HCT116 (cell line): ENCODE measurements at regions of chr1 and their contacts with region 1.

Region 1: GRCh38 chr1:40338745-40339424 is 21.8 kb upstream of the COL9A2 start:
- DNase-seq: peak; percentile 74
- ATAC-seq: peak; percentile 97
- H3K4me3 ChIP-seq: no peak overlapping the region
- H3K27ac ChIP-seq: no peak overlapping the region
- H3K4me1 ChIP-seq: peaks cover 0 to 4% of the 10 kb centered on the region in 2 experiments; a peak in 1 of 4 replicates
- H3K27me3 ChIP-seq: no peaks in the 10 kb centered on the region
- CTCF ChIP-seq: peak; percentile 93 to 99 (median 98)
- POLR2A ChIP-seq: no peak
- RAD21 ChIP-seq: peak; percentile 99

Region 2: DNA sequence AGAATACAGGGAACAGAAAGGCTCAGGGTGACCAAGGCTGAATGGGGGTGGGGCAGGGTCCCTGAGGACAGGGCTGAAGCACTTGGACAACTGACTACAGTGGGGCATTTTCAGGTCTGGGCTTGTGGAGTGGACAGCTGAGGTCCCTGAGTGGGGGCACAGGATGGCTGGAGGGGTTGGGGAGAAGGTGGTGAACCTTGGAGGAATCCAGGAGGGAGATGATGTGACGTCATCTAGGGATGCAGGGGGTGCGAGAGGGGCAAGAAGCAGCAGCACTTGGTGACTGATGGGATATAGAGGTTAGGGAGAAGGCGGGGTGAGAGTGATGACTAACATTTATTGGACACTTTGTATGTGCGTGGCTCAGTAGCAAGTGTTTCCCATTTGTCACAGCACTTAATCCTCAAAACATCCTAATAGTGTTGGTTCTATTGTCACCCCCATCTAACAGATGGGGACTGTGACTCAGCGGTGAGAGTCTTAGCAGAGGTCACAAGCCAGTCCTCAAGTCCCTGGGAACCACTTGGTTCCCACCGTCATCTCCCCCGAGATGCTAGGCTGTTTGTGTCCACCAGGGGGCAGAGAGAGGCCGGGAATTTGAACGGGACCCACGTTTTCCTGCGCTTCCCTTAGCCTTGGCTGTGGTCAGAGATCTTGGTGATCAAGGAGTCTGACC is 522.3 kb before region 1 on chr1:
- CTCF ChIA-PET with region 1: interaction called, 3 read pairs
- POLR2A ChIA-PET with region 1: no interaction called
- RAD21 ChIA-PET with region 1: no interaction called
- intact Hi-C with region 1: loop called (anchors 10 kb)
- DNase-seq: peak; percentile 61
- ATAC-seq: peak; percentile 89
- H3K4me3 ChIP-seq: no peak overlapping the region
- H3K27ac ChIP-seq: no peak overlapping the region
- H3K4me1 ChIP-seq: peaks cover 0 to 15% of the 10 kb centered on the region in 2 experiments; a peak in 3 of 4 replicates
- H3K27me3 ChIP-seq: no peaks in the 10 kb centered on the region
- CTCF ChIP-seq: peak; percentile 76 to 86 (median 85)
- POLR2A ChIP-seq: no peak
- RAD21 ChIP-seq: peak; percentile 89

Region 3: GRCh38 chr1:39866767-39867166 is 472.1 kb before region 1 on chr1:
- CTCF ChIA-PET with region 1: no interaction called
- POLR2A ChIA-PET with region 1: no interaction called
- RAD21 ChIA-PET with region 1: no interaction called
- intact Hi-C with region 1: no loop called
- DNase-seq: no peak
- ATAC-seq: no peak
- H3K4me3 ChIP-seq: no peak overlapping the region
- H3K27ac ChIP-seq: no peak overlapping the region
- H3K4me1 ChIP-seq: peaks cover 0 to under 1% of the 10 kb centered on the region in 2 experiments; a peak in 1 of 4 replicates
- H3K27me3 ChIP-seq: no peaks in the 10 kb centered on the region
- CTCF ChIP-seq: no peak
- POLR2A ChIP-seq: no peak
- RAD21 ChIP-seq: no peak

Region 4: GRCh38 chr1:40078512-40079333 is 260.2 kb before region 1 on chr1:
- CTCF ChIA-PET with region 1: interaction called, 44 read pairs
- POLR2A ChIA-PET with region 1: no interaction called
- RAD21 ChIA-PET with region 1: interaction called, 5 to 6 read pairs
- intact Hi-C with region 1: loop called (anchors 1 kb)
- DNase-seq: peak; percentile 41
- ATAC-seq: peak; percentile 89
- H3K4me3 ChIP-seq: no peak overlapping the region
- H3K27ac ChIP-seq: no peak overlapping the region
- H3K4me1 ChIP-seq: no peaks in the 10 kb centered on the region
- H3K27me3 ChIP-seq: no peaks in the 10 kb centered on the region
- CTCF ChIP-seq: peak; percentile 63 to 81 (median 71); a peak in 5 of 6 replicates
- POLR2A ChIP-seq: no peak
- RAD21 ChIP-seq: peak; percentile 70

Region 5: DNA sequence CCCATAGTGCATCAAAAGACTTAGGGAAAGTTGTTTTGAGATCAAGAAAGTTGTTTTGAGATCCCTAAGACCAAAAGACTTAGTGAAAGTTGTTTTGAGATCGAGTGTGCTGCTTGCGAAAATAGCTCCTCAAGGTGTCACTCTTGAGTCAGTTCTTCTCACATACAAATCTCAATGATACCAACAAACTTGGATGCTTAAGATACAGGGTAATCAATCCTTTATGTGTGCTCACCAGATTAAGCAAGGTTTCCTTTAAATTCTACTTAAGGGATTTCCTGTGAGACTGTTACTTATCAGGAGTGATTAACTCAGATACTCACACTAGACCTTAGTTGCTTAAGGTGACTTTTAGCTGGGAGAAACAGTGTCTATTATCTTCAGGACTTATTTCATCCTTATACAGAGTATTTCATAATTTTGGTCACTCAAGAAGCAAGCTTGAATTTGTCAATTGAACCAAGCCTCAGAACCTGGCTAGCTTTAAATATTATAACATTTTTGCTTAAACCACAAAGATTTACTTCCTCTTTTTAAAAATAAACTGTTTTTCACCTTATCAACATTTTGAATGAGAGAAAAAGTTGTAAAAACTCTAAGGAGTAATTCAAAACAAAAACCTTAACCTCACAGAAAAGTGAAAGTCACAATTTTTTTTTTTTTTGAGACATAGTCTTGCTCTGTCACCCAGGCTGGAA is 185.7 kb before region 1 on chr1:
- CTCF ChIA-PET with region 1: interaction called, 71 read pairs
- POLR2A ChIA-PET with region 1: interaction called, 4 read pairs
- RAD21 ChIA-PET with region 1: interaction called, 3 to 12 read pairs
- intact Hi-C with region 1: loop called (anchors 1 kb)
- DNase-seq: peak; percentile 62
- ATAC-seq: peak; percentile 92
- H3K4me3 ChIP-seq: peak overlapping the region in 1 of 2 experiments; percentile 33; a peak in 2 of 4 replicates
- H3K27ac ChIP-seq: no peak overlapping the region
- H3K4me1 ChIP-seq: peaks cover 0 to 6% of the 10 kb centered on the region in 2 experiments; a peak in 1 of 4 replicates
- H3K27me3 ChIP-seq: no peaks in the 10 kb centered on the region
- CTCF ChIP-seq: peak; percentile 71 to 79 (median 76)
- POLR2A ChIP-seq: no peak
- RAD21 ChIP-seq: peak; percentile 83

Region 6: GRCh38 chr1:40353082-40353481 is 14.2 kb after region 1 on chr1:
- CTCF ChIA-PET with region 1: interaction called, 10 read pairs
- POLR2A ChIA-PET with region 1: no interaction called
- RAD21 ChIA-PET with region 1: no interaction called
- intact Hi-C with region 1: no loop called
- DNase-seq: no peak
- ATAC-seq: no peak
- H3K4me3 ChIP-seq: no peak overlapping the region
- H3K27ac ChIP-seq: no peak overlapping the region
- H3K4me1 ChIP-seq: no peaks in the 10 kb centered on the region
- H3K27me3 ChIP-seq: no peaks in the 10 kb centered on the region
- CTCF ChIP-seq: no peak
- POLR2A ChIP-seq: no peak
- RAD21 ChIP-seq: no peak